PC-3 (cell line): ENCODE measurements at regions of chr2 and their contacts with region 1.

Region 1: DNA sequence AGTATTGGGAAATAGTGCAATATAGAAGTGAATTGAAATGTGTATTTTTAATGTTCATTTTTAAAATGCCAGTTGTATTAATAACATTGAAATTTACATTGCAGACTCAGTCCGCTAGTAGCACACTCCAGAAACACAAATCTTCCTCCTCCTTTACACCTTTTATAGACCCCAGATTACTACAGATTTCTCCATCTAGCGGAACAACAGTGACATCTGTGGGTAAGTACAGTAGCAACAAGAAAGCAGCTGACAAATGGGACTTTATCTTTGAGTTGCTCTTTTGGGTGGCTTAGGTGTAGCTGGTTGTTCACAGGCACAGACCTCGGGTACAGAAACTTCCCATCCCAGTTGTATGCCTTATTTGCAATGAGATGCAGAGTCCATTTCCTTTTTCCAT is 118.2 kb upstream of the IL1R2 start:
- DNase-seq: peak; percentile 42
- ATAC-seq: peak; percentile 35; the same call in 1 of the 2 replicates
- H3K4me3 ChIP-seq: no peak overlapping the region
- H3K27ac ChIP-seq: no peak overlapping the region
- H3K4me1 ChIP-seq: no peaks in the 10 kb centered on the region
- H3K27me3 ChIP-seq: no peaks in the 10 kb centered on the region
- CTCF ChIP-seq: peak; percentile 50

Region 2: DNA sequence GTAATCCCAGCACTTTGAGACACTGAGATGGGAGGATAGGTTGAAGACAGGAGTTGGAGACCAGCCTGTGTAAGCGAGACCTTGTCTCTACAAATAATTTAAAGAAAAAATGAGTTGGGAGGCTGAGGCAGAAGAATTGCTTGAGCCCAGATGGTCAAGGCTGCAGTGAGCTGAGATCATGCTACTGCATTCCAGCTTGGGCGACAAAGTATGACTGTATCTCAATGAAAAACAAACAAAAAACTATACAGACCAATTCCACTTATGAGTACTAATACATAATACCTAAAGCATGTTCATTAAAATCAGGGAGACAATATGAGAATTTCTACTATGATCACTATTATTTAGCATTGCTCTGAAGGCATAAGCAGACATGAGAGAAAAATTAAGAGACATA is 577.6 kb before region 1 on chr2:
- CTCF ChIA-PET with region 1: no interaction called
- POLR2A ChIA-PET with region 1: no interaction called
- intact Hi-C with region 1: no loop called
- DNase-seq: no peak
- ATAC-seq: no peak
- H3K4me3 ChIP-seq: no peak overlapping the region
- H3K27ac ChIP-seq: no peak overlapping the region
- H3K4me1 ChIP-seq: no peaks in the 10 kb centered on the region; the same call in 1 of the 2 replicates
- H3K27me3 ChIP-seq: no peaks in the 10 kb centered on the region
- CTCF ChIP-seq: no peak

Region 3: GRCh38 chr2:101725515-101726192 is 147.9 kb before region 1 on chr2:
- CTCF ChIA-PET with region 1: no interaction called
- POLR2A ChIA-PET with region 1: no interaction called
- intact Hi-C with region 1: no loop called
- DNase-seq: peak; percentile 24
- ATAC-seq: no peak
- H3K4me3 ChIP-seq: no peak overlapping the region
- H3K27ac ChIP-seq: no peak overlapping the region
- H3K4me1 ChIP-seq: peaks cover 9% of the 10 kb centered on the region
- H3K27me3 ChIP-seq: no peaks in the 10 kb centered on the region
- CTCF ChIP-seq: peak; percentile 52; the same call in 1 of the 2 replicates

Region 4: GRCh38 chr2:101847661-101848339 is 25.7 kb before region 1 on chr2:
- CTCF ChIA-PET with region 1: interaction called, 13 read pairs
- POLR2A ChIA-PET with region 1: no interaction called
- intact Hi-C with region 1: no loop called
- DNase-seq: peak; percentile 38
- ATAC-seq: peak; percentile 21; the same call in 1 of the 2 replicates
- H3K4me3 ChIP-seq: no peak overlapping the region
- H3K27ac ChIP-seq: no peak overlapping the region
- H3K4me1 ChIP-seq: peaks cover 14% of the 10 kb centered on the region
- H3K27me3 ChIP-seq: no peaks in the 10 kb centered on the region
- CTCF ChIP-seq: no peak